Activated CD4-positive, alpha-beta T cell treated with anti-CD3 and anti-CD28 coated beads for 36 hours (primary cell): ENCODE measurements at regions of chr7 and their contacts with region 1.

Region 1: DNA sequence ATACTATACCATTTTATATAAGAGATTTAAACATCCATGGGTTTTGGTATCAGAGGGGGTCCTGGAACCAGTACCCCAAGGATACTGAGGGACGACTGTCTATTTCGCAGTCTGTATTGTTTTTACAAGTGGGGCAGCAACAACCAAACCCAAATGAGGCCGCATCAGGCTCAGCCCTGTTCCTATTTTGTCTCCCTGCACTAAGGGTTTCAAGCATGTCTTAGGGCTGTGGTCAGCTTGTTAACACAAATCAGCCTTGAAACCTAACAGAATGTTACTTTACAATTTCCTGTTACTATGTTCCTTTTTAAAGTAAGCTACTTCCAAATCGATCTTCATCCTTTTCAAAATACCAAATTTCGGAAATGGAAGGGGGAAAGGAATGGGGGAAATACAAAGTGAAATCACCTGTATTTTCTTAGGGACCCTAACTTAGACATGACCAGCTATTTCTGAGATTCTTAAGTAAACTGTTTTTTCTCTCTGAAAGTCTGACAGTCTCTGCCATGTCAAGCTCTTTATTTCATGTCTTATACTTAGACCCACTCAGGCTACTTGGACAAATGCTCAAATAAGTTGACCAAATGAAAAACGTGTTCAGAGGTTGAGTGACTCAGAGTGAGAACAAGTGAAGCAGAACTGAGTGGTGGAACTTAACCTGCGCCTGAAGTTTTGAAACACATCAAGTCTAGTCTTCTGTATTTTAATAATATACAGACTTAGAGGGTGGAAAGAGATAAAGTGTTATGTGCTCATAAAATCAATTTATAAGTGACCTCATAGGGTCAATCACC is 75.8 kb downstream of the C1GALT1 start:
- DNase-seq: no peak
- ATAC-seq: peak; percentile 67
- H3K4me3 Mint-ChIP-seq: peak overlapping the region; percentile 33
- H3K27ac Mint-ChIP-seq: peak overlapping the region; percentile 72
- H3K4me1 Mint-ChIP-seq: peaks cover 33% of the 10 kb centered on the region
- H3K27me3 Mint-ChIP-seq: no peaks in the 10 kb centered on the region

Region 2: GRCh38 chr7:7157177-7157886 is 100.8 kb before region 1 on chr7:
- CTCF ChIA-PET with region 1: interaction called, 3 read pairs
- POLR2A ChIA-PET with region 1: no interaction called
- intact Hi-C with region 1: loop called in 1 of 2 experiments (anchors 2 kb)
- DNase-seq: peak; percentile 65
- ATAC-seq: peak; percentile 86
- H3K4me3 Mint-ChIP-seq: peak overlapping the region; percentile 57
- H3K27ac Mint-ChIP-seq: peak overlapping the region; percentile 74
- H3K4me1 Mint-ChIP-seq: peaks cover 49% of the 10 kb centered on the region
- H3K27me3 Mint-ChIP-seq: no peaks in the 10 kb centered on the region